ENCODE measurements at regions of chr16 and their contacts with region 1.

Region 1: GRCh38 chr16:72093448-72094265 is at the starts of genes DHX38 and TXNL4B:
- DNase-seq: peak; percentile 98
- ATAC-seq: peak; percentile 97
- H3K4me3 ChIP-seq: peak within 1 kb of the TSS; percentile 98
- H3K27ac ChIP-seq: peak within 1 kb of the TSS; percentile 91
- H3K4me1 ChIP-seq: peaks cover 11% of the 10 kb centered on the region
- H3K27me3 ChIP-seq: no peaks in the 10 kb centered on the region
- CTCF ChIP-seq: no peak
- EP300 ChIP-seq: 0 out of 4 replicates have a peak, but pooled peaks of 1 of the 2 experiments have one; percentile 15
- POLR2A ChIP-seq: peak; percentile 86
- RAD21 ChIP-seq: no peak
- polyA plus RNA-seq, gene DHX38: 2.1 to 5.8 TPM
- polyA plus RNA-seq, gene TXNL4B: 13.8 to 15.5 TPM

Region 2: GRCh38 chr16:71461686-71462648 is 631.7 kb before region 1 on chr16 and contains the start of gene ZNF23:
- CTCF ChIA-PET with region 1: no interaction called
- POLR2A ChIA-PET with region 1: no interaction called
- RAD21 ChIA-PET with region 1: no interaction called
- SMC1A ChIA-PET with region 1: no interaction called
- in situ Hi-C with region 1: no loop called
- intact Hi-C with region 1: loop called (anchors 10 kb)
- DNase-seq: peak; percentile 39
- ATAC-seq: peak; percentile 98
- H3K4me3 ChIP-seq: peak within 1 kb of the TSS; percentile 90
- H3K27ac ChIP-seq: peak within 1 kb of the TSS; percentile 74
- H3K4me1 ChIP-seq: no peaks in the 10 kb centered on the region
- H3K27me3 ChIP-seq: no peaks in the 10 kb centered on the region
- CTCF ChIP-seq: peak; percentile 9 to 23 (median 22); a peak in 3 of 6 replicates
- EP300 ChIP-seq: no peak
- POLR2A ChIP-seq: peak; percentile 99
- RAD21 ChIP-seq: no peak
- polyA plus RNA-seq, gene ZNF23: 3.6 to 4.8 TPM

Region 3: DNA sequence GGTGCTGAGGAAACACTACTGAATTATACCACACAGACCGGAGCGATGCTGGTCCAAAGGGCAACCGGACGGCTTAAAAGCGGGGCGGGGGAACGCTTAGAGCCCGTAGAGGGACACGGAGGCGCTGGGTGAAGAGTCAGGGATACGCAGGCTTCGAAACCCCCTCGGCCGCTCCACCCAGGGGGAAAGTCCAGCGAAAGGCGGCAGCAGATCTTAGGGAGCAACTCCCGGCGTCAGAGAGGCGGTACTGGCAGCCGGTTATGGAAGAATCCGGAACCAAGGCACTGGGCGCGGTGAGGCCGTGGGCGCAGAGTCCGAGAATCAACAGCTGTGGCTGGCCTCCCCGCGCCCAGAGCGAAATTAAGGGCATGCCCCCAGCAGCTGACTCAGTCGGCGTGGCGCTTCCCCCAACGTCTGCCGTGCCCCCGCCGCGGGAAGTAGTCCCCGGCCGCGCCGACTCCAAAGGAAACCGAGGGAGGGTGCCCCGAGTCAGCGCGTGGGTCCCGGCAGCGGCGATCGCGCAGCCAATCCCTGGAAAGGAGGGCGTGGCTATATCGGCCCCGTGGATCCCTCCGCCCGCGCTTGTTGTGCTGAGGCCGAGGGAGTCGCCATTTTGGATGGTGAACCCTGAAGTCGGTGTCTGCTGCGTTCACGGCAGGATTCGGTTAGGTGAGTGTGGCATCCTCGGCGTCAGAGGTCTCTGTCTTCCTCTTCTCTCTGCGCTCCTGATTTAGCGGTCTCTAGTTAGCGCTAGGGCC is 198.6 kb before region 1 on chr16 and contains the start of gene IST1:
- CTCF ChIA-PET with region 1: interaction called, 3 read pairs
- POLR2A ChIA-PET with region 1: no interaction called
- RAD21 ChIA-PET with region 1: no interaction called
- SMC1A ChIA-PET with region 1: no interaction called
- in situ Hi-C with region 1: no loop called
- intact Hi-C with region 1: loop called (anchors 10 kb)
- DNase-seq: peak; percentile 85
- ATAC-seq: peak; percentile 90
- H3K4me3 ChIP-seq: peak within 1 kb of the TSS; percentile 91
- H3K27ac ChIP-seq: peak within 1 kb of the TSS; percentile 98
- H3K4me1 ChIP-seq: no peaks in the 10 kb centered on the region
- H3K27me3 ChIP-seq: no peaks in the 10 kb centered on the region
- CTCF ChIP-seq: no peak
- EP300 ChIP-seq: peak in 1 of 2 experiments; percentile 33; a peak in 2 of 4 replicates
- POLR2A ChIP-seq: peak; percentile 93
- RAD21 ChIP-seq: no peak
- polyA plus RNA-seq, gene IST1: 97.3 to 136 TPM

Region 4: DNA sequence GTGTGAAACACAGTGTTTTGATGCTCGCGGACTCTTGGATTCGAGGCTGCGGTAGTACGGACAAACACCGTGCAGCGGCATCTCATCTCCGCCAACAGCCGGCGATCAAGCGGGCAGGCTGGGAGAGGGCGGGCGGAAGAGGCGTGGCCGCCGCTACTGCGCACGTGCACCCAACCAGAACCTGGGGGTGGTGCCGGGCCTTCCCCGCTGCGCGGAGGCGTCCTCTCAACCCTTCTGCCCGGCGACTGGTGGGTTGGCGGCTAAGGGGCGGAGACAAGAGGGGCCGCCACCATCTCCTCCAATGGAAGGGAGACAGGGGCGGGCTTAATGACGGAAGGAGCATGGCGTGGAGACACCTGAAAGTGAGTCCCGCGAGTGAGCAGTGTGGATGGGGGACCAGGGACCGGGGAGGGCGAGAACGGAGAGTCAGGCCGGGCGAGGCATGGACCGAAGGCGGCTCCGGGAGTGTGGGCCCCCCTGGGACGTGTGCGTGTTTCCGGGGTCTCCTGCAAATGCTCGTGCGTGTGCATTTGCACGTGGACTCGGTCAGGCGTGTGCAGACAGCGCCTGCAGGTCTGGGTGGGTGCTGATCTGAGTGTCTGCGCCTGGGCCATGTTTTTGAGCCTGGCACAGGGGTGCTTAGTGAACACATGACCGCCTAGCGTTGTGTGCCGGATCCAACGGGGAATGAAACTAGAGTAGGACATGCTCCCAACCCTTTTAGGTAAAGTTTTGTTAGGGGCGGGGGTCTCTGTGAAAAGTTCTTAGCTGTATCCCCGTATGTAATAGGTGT is 85.0 kb before region 1 on chr16 and contains the start of gene DHODH:
- CTCF ChIA-PET with region 1: interaction called, 5 read pairs
- POLR2A ChIA-PET with region 1: no interaction called
- RAD21 ChIA-PET with region 1: no interaction called
- SMC1A ChIA-PET with region 1: no interaction called
- in situ Hi-C with region 1: no loop called
- intact Hi-C with region 1: loop called (anchors 1 kb)
- DNase-seq: peak; percentile 93
- ATAC-seq: peak; percentile 99
- H3K4me3 ChIP-seq: peak within 1 kb of the TSS; percentile 99
- H3K27ac ChIP-seq: peak within 1 kb of the TSS; percentile 77
- H3K4me1 ChIP-seq: 0 out of 2 replicates have a peak, but pooled peaks cover 2% of the 10 kb centered on the region
- H3K27me3 ChIP-seq: no peaks in the 10 kb centered on the region
- CTCF ChIP-seq: peak in 2 of 3 experiments; percentile 19 to 20; a peak in 1 of 6 replicates
- EP300 ChIP-seq: peak in 1 of 2 experiments; percentile 47; a peak in 1 of 4 replicates
- POLR2A ChIP-seq: peak; percentile 96
- RAD21 ChIP-seq: no peak
- polyA plus RNA-seq, gene DHODH: 3.4 to 4.1 TPM

Region 5: GRCh38 chr16:72066747-72067146 is 26.9 kb before region 1 on chr16:
- CTCF ChIA-PET with region 1: interaction called, 27 read pairs
- POLR2A ChIA-PET with region 1: no interaction called
- RAD21 ChIA-PET with region 1: interaction called, 4 read pairs
- SMC1A ChIA-PET with region 1: interaction called, 10 read pairs
- in situ Hi-C with region 1: no loop called
- intact Hi-C with region 1: no loop called
- DNase-seq: no peak
- ATAC-seq: peak; percentile 84
- H3K4me3 ChIP-seq: no peak overlapping the region
- H3K27ac ChIP-seq: no peak overlapping the region
- H3K4me1 ChIP-seq: no peaks in the 10 kb centered on the region
- H3K27me3 ChIP-seq: no peaks in the 10 kb centered on the region
- CTCF ChIP-seq: peak; percentile 55 to 57 (median 56)
- EP300 ChIP-seq: no peak
- POLR2A ChIP-seq: no peak
- RAD21 ChIP-seq: peak; percentile 67